ENCODE measurements at regions of chr12 and their contacts with region 1.

Region 1: GRCh38 chr12:88993651-88994050 is 358.6 kb downstream of the DUSP6 start:
- DNase-seq: peak; percentile 19
- H3K4me3 ChIP-seq: no peak overlapping the region
- H3K27ac ChIP-seq: no peak overlapping the region
- H3K4me1 ChIP-seq: no peaks in the 10 kb centered on the region
- H3K27me3 ChIP-seq: no peaks in the 10 kb centered on the region
- CTCF ChIP-seq: peak; percentile 77
- EP300 ChIP-seq: no peak
- RAD21 ChIP-seq: peak; percentile 91

Region 2: DNA sequence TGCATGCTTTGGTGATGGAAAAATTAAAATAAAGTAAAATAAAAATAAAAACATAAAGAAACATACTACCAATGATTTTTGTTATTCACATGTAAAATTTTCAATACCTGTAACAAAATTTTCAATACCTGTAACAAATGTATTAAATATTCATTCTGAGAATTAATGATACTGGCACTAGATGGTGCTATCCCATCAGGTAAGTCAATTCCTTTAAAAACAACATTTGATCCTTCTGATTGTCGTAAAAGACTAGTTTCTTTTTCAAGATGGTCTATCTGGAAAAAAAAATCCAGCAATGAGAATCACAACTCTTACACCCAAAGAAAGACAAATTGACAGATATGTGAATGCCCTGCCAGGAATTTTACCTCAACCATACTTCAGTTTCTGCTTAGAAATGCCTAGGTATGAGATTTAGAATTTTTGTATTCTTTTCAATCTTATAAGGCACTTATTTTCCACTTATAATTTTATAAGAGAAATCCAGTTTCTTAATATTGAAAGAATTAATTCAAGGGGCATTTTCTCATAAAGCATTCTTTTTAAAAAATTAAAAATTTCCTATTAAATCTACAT is 882.5 kb before region 1 on chr12:
- CTCF ChIA-PET with region 1: interaction called, 11 read pairs
- POLR2A ChIA-PET with region 1: no interaction called
- DNase-seq: peak; percentile 25
- H3K4me3 ChIP-seq: peak overlapping the region in 1 of 2 experiments; percentile 36; a peak in 2 of 4 replicates
- H3K27ac ChIP-seq: no peak overlapping the region
- H3K4me1 ChIP-seq: no peaks in the 10 kb centered on the region; a peak in 1 of 4 replicates
- H3K27me3 ChIP-seq: no peaks in the 10 kb centered on the region
- CTCF ChIP-seq: peak; percentile 68
- EP300 ChIP-seq: no peak
- RAD21 ChIP-seq: peak; percentile 72

Region 3: DNA sequence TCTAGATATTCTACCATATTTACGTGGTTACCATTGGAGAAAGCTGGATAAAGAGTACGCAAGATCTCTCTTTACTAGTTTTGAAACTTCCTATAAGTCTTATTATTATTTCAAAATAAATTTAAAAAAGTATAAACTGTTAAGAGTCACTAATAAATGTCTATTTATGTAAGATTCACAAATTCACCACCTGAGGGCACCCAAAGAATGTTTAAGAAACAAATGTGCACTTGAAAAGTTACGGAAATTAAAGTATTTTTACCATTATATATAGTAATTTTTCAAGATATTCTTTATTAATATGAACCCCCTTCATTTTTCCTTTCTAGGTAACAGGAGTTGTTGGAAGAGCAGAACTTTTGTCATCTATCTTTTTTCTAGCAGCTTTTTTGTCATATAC is 839.7 kb before region 1 on chr12:
- CTCF ChIA-PET with region 1: interaction called, 34 read pairs
- POLR2A ChIA-PET with region 1: no interaction called
- DNase-seq: peak; percentile 2
- H3K4me3 ChIP-seq: no peak overlapping the region
- H3K27ac ChIP-seq: no peak overlapping the region; a peak in 1 of 4 replicates
- H3K4me1 ChIP-seq: peaks cover 0 to 8% of the 10 kb centered on the region in 2 experiments; a peak in 2 of 4 replicates
- H3K27me3 ChIP-seq: no peaks in the 10 kb centered on the region
- CTCF ChIP-seq: peak; percentile 58
- EP300 ChIP-seq: no peak
- RAD21 ChIP-seq: peak; percentile 62

Region 4: DNA sequence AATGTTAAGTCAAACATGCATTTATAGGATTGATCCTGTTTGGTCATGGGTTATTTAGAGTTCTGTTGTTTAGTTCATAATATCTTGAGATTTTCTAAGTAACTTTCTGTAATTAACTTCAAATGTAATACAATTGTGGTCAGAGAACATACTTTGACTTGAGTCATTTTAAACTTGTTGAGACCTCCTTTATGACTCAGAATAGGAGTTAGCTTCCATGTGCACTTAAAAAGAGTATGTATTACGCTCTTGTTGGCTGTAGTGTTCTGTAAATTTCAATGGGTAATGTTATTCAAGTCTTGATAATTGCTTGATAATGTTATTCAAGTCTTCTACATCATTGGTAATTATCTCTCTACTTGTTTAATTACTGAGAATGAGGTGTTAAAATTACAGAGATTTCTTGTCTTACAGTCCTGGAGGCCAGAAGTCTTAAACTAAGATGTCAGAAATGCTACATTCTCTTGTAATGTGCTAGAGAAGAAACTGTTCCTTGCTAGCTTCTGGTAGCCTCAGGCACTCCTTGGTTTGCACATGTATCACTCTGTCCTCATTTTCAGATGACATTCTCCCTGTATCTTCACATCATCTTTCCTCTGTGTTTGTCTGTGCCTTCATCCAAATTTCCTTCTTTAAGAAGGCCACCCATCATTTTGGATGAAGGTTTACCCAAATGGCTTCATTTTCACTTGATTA is 654.2 kb before region 1 on chr12:
- CTCF ChIA-PET with region 1: no interaction called
- POLR2A ChIA-PET with region 1: no interaction called
- DNase-seq: no peak
- H3K4me3 ChIP-seq: no peak overlapping the region
- H3K27ac ChIP-seq: no peak overlapping the region
- H3K4me1 ChIP-seq: peaks cover 0 to 5% of the 10 kb centered on the region in 2 experiments; a peak in 1 of 4 replicates
- H3K27me3 ChIP-seq: no peaks in the 10 kb centered on the region
- CTCF ChIP-seq: no peak
- EP300 ChIP-seq: no peak
- RAD21 ChIP-seq: no peak

Region 5: DNA sequence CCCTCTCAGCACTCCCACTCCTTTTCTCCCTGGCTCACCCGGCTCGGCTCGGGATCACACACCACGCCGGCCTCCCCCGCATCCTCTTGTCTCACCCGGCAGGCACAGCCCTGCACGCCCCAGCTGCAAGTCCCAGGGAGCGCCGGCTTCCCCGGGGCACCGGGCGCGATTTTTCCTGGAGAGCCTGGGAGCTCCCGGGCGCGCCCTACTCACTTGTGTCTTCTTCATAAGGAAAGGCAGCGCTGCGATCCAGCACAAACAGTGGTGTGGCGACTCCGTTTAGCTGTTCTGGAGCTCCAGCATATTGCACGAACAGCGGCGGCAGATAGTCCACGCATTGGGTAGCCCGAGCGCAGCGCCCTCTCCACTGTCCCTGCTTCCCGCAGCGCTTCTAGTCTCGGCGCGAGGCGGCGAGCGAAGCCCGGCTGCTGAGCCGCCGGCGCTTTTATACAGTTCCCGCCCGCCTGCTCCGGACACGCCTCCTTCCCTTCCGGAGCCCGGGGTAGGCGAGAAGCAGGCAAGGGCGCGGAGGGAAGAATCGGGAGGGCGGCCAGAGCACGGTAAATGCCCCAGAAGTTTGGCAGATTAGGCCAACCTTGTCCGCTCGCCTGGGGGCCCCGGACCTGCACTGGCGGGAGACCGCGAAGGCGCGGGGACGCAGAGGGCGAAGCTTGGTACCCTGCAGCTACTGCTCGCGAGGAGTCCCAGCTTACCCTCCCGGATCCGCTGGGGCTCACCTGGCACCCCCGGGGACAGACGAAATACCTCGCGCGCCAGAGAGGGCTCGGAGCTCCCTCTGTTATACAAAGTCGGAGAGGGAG is 413.4 kb before region 1 on chr12 and contains the start of gene KITLG:
- CTCF ChIA-PET with region 1: interaction called, 11 read pairs
- POLR2A ChIA-PET with region 1: no interaction called
- DNase-seq: peak; percentile 83
- H3K4me3 ChIP-seq: peak within 1 kb of the TSS; percentile 66 to 98
- H3K27ac ChIP-seq: peak within 1 kb of the TSS in 1 of 2 experiments; percentile 75; a peak in 2 of 4 replicates
- H3K4me1 ChIP-seq: peaks cover 0 to 10% of the 10 kb centered on the region in 2 experiments; a peak in 2 of 4 replicates
- H3K27me3 ChIP-seq: no peaks in the 10 kb centered on the region
- CTCF ChIP-seq: peak; percentile 42
- EP300 ChIP-seq: no peak
- RAD21 ChIP-seq: peak; percentile 59
- polyA plus RNA-seq, gene KITLG: 8.9 and 13.3 TPM in 2 replicates